ENCODE measurements at regions of chr2 and their contacts with region 1.

Region 1: GRCh38 chr2:100818606-100819369 is 1.2 kb upstream of the NPAS2 start:
- DNase-seq: peak; percentile 71 to 82
- ATAC-seq: peak; percentile 75 to 83 (median 76)
- H3K4me3 ChIP-seq: peak overlapping the region; percentile 83
- H3K27ac ChIP-seq: peak overlapping the region; percentile 87
- H3K4me1 ChIP-seq: peaks cover 23% of the 10 kb centered on the region
- H3K27me3 ChIP-seq: no peaks in the 10 kb centered on the region
- CTCF ChIP-seq: no peak

Region 2: DNA sequence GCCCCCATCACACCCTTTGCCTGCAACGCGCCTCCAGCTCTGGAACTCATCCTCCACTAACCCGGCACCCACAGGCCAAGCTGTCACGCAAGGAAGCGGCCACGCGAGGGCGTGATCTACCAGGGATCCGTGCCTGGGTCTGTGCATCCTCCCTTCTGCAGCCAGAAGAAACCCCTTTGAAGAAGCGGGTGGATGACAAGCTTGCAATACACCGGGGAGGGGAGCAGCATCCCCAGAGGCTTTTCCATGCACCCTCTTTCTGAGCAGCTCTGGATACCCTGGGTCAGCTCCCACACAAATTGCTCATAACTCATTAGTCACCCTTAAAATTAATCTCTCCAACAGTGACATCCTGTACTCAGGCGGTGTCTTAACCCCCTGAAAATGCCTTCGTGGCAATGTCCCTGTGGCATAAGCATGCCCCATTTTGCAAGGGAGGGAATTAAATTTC is 208.4 kb before region 1 on chr2:
- intact Hi-C with region 1: loop called in 1 of 2 experiments (anchors 5 kb)
- DNase-seq: peak; percentile 71 to 79
- ATAC-seq: peak; percentile 74 to 85 (median 81)
- H3K4me3 ChIP-seq: no peak overlapping the region
- H3K27ac ChIP-seq: no peak overlapping the region
- H3K4me1 ChIP-seq: no peaks in the 10 kb centered on the region
- H3K27me3 ChIP-seq: no peaks in the 10 kb centered on the region
- CTCF ChIP-seq: peak; percentile 55

Region 3: DNA sequence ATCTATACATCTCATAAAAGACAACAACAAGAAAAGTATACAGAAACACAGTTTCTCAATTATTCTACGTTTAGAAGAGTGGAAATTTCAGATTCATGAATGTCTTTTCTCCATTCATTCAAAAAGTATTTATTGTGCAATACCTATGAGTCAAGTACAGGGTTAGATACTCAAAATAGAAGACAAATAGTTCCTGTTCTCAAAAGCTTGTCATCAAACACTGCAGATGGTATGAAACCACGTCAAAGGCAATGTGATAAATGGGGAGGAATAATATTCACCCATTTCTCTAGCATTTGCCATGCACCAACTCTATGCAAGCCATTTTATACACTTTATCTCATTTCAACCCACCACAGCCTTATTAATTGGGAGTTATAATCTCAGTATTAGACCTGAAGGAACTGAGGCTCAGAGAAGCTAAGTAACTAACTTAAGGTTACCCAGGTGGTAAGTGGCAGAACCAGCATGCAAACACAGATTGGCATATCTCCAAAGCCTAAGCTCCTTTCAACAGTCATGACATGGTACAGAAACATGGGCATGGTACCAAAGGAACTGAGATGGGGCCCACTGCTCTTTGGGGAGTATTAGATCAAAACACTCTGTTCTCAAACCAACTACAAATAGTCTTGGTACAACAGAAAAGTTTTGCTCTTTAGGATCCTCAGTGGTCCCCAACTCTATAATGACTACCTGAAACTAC is 66.0 kb before region 1 on chr2:
- intact Hi-C with region 1: loop called in 1 of 2 experiments (anchors 5 kb)
- DNase-seq: no peak
- ATAC-seq: peak; percentile 76 to 88 (median 84)
- H3K4me3 ChIP-seq: no peak overlapping the region
- H3K27ac ChIP-seq: peak overlapping the region; percentile 41
- H3K4me1 ChIP-seq: peaks cover 8% of the 10 kb centered on the region
- H3K27me3 ChIP-seq: no peaks in the 10 kb centered on the region
- CTCF ChIP-seq: no peak

Region 4: GRCh38 chr2:100957996-100958653 is 139.3 kb after region 1 on chr2:
- intact Hi-C with region 1: loop called (anchors 5 to 10 kb)
- DNase-seq: peak in 1 of 2 donors; percentile 31
- ATAC-seq: peak; percentile 91 to 96 (median 93)
- H3K4me3 ChIP-seq: peak overlapping the region; percentile 42
- H3K27ac ChIP-seq: peak overlapping the region; percentile 34
- H3K4me1 ChIP-seq: peaks cover 10% of the 10 kb centered on the region
- H3K27me3 ChIP-seq: no peaks in the 10 kb centered on the region
- CTCF ChIP-seq: no peak

Region 5: DNA sequence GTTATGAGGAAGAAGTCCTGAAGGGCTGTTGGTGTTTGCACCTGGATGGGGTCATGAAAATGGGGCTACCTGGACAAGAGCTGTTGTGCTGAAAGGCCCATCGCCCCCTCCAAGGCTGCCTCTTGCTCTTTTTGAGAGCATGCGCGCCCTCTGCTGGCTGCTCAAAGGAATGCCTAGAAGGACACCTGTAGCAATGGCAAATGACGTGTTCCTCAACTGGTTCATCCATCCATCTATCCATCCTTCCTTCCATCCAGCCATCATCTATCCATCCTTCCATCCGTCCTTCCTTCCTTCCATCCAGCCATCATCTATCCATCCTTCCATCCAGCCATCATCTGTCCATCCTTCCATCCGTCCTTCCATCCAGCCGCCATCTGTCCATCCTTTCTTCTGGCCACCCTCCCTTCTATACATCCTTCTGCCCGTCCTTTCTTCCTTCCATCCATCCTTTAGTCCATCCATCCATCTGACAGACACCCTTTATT is 166.1 kb after region 1 on chr2:
- intact Hi-C with region 1: loop called in 1 of 2 experiments (anchors 10 kb)
- DNase-seq: peak; percentile 78 to 88
- ATAC-seq: peak; percentile 77 to 88 (median 82)
- H3K4me3 ChIP-seq: no peak overlapping the region
- H3K27ac ChIP-seq: no peak overlapping the region
- H3K4me1 ChIP-seq: no peaks in the 10 kb centered on the region
- H3K27me3 ChIP-seq: no peaks in the 10 kb centered on the region
- CTCF ChIP-seq: peak; percentile 92

Region 6: GRCh38 chr2:100995410-100996075 is 176.8 kb after region 1 on chr2:
- intact Hi-C with region 1: loop called in 1 of 2 experiments (anchors 1 kb)
- DNase-seq: no peak
- ATAC-seq: no peak
- H3K4me3 ChIP-seq: no peak overlapping the region
- H3K27ac ChIP-seq: no peak overlapping the region
- H3K4me1 ChIP-seq: no peaks in the 10 kb centered on the region
- H3K27me3 ChIP-seq: no peaks in the 10 kb centered on the region
- CTCF ChIP-seq: no peak

Region 7: GRCh38 chr2:101831351-101831865 is 1012.6 kb after region 1 on chr2:
- intact Hi-C with region 1: no loop called
- DNase-seq: peak; percentile 62 to 76
- ATAC-seq: peak; percentile 88 to 96 (median 91)
- H3K4me3 ChIP-seq: no peak overlapping the region
- H3K27ac ChIP-seq: no peak overlapping the region
- H3K4me1 ChIP-seq: peaks cover 17% of the 10 kb centered on the region
- H3K27me3 ChIP-seq: no peaks in the 10 kb centered on the region
- CTCF ChIP-seq: peak; percentile 84